ENCODE measurements at regions of chr12 and their contacts with region 1.

Region 1: GRCh38 chr12:47773062-47773857 is at the start of gene SLC48A1:
- DNase-seq: peak; percentile 57
- H3K4me3 ChIP-seq: peak within 1 kb of the TSS; percentile 80 to 86
- H3K27ac ChIP-seq: peak within 1 kb of the TSS; percentile 76 to 77
- H3K4me1 ChIP-seq: no peaks in the 10 kb centered on the region
- H3K27me3 ChIP-seq: no peaks in the 10 kb centered on the region
- CTCF ChIP-seq: peak in 3 of 4 experiments; percentile 13 to 39 (median 35)
- POLR2A ChIP-seq: peak; percentile 41
- total RNA-seq, gene SLC48A1: 39.0 to 52.5 TPM

Region 2: DNA sequence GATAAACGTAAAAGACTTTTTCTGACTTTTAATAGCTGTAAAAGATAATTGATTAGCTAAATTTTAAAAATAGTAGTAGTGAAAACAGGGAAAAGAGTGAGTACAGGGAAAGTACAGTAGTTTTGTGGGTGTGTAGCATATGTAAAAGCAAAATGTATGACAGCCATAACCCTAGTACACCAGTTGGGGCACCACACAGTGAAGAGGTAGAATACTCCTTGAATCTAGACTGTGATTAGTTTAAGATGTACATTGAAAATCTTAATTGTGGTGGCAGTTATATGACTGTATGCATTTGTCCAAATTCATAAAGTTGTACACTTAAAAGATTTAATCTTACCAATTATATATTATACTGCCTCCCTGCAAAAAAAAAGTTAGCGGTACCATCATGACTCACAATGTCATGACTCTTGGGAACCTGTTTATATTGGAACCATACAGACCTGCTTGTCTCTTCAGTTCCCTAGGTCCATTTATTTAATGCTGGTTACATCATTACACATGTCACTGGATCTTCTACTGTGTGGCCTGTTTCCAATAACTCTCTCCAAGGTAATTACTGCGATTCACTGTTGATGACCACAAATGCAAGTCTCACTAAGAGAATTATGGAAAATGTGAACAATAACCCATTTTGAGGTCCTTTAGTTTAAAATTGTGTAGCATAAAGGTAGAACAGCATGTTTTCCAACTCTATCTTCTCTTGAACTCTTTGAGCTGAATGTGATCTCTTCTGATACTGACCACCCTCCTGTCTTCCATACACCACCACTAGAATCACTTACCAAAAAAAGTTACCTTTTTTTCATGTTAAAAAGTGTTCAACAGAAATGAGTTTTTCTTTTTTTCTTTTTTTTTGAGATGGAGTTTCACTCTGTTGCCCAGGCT is 429.3 kb before region 1 on chr12:
- intact Hi-C with region 1: no loop called
- DNase-seq: no peak
- H3K4me3 ChIP-seq: no peak overlapping the region
- H3K27ac ChIP-seq: no peak overlapping the region
- H3K4me1 ChIP-seq: no peaks in the 10 kb centered on the region
- H3K27me3 ChIP-seq: no peaks in the 10 kb centered on the region
- CTCF ChIP-seq: no peak
- POLR2A ChIP-seq: no peak

Region 3: GRCh38 chr12:47758834-47759690 is 14.2 kb before region 1 on chr12 and contains the start of gene RAPGEF3:
- intact Hi-C with region 1: loop called (anchors 1 kb)
- DNase-seq: peak; percentile 88
- H3K4me3 ChIP-seq: peak within 1 kb of the TSS; percentile 51 to 60
- H3K27ac ChIP-seq: peak within 1 kb of the TSS; percentile 76 to 78
- H3K4me1 ChIP-seq: peaks cover 16% of the 10 kb centered on the region
- H3K27me3 ChIP-seq: no peaks in the 10 kb centered on the region
- CTCF ChIP-seq: peak; percentile 31 to 57 (median 42)
- POLR2A ChIP-seq: peak; percentile 21
- total RNA-seq, gene RAPGEF3: 19.1 to 28.5 TPM

Region 4: GRCh38 chr12:47812797-47813510 is 39.7 kb after region 1 on chr12:
- intact Hi-C with region 1: loop called (anchors 2 kb)
- DNase-seq: peak; percentile 86
- H3K4me3 ChIP-seq: peak overlapping the region; percentile 13 to 31
- H3K27ac ChIP-seq: peak overlapping the region; percentile 83 to 93
- H3K4me1 ChIP-seq: peaks cover 29% of the 10 kb centered on the region
- H3K27me3 ChIP-seq: no peaks in the 10 kb centered on the region
- CTCF ChIP-seq: no peak
- POLR2A ChIP-seq: no peak

Region 5: DNA sequence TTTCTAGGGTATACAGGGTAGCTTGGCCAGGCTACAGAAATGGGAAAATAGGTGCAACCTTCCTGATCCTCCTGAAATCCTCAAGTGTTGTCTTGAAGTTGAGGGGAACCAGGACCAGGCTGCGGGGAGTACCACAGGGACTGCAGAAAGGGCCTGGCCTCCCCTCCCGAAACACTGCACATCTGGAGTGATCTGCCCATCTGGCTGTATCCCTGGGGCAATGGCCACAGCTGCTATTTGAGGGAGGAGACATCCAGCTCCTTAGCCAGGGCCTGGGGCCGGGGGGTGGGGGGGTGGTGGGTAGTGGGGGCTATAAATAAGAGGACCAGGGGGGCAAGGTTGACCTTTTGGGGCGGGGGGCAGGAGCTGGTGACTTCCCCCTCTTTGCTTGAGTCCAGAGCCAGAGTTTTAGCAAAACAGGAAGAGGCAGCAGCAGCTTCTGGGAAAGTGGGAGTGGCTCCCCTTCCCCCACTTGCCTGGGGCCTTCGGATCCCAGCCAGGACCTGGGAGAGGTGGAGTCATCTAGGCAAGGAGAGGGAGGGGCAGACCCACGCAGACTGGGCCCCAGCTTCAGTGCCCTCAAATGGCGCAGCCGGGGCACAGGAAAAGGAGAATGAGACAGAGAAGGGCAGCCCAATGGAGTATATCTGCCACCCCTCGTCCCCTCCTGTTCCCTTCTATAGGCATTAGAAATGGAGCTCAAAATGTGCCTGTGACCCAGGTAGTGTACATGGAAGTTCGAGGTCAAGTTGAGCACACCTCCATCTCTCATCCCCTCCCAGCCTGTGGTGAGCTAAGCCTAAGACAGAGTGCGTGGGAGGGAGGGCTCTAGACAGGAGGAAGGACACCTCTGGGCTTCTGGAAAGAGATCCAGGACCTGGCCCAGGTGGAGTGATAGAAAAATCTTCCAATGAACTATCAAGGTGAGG is 55.6 kb after region 1 on chr12:
- intact Hi-C with region 1: no loop called
- DNase-seq: peak; percentile 78
- H3K4me3 ChIP-seq: no peak overlapping the region
- H3K27ac ChIP-seq: peak overlapping the region; percentile 58 to 66
- H3K4me1 ChIP-seq: peaks cover 3% of the 10 kb centered on the region
- H3K27me3 ChIP-seq: no peaks in the 10 kb centered on the region
- CTCF ChIP-seq: peak in 1 of 4 experiments; percentile 7
- POLR2A ChIP-seq: peak; percentile 45

Measured in prostate gland (tissue), 2 donors.